Breast epithelium (tissue), 4 donors: ENCODE measurements at regions of chr1 and their contacts with region 1.

Region 1: GRCh38 chr1:150464422-150464826 is 22.8 kb upstream of the TARS2 start:
- DNase-seq: peak in 1 of 2 donors; percentile 31
- H3K4me3 ChIP-seq: no peak overlapping the region
- H3K27ac ChIP-seq: no peak overlapping the region
- H3K4me1 ChIP-seq: no peaks in the 10 kb centered on the region
- H3K27me3 ChIP-seq: no peaks in the 10 kb centered on the region
- CTCF ChIP-seq: peak; percentile 73 to 80 (median 76)
- POLR2A ChIP-seq: no peak

Region 2: GRCh38 chr1:150083907-150084306 is 380.5 kb before region 1 on chr1:
- intact Hi-C with region 1: no loop called
- DNase-seq: no peak
- H3K4me3 ChIP-seq: no peak overlapping the region
- H3K27ac ChIP-seq: no peak overlapping the region
- H3K4me1 ChIP-seq: no peaks in the 10 kb centered on the region
- H3K27me3 ChIP-seq: no peaks in the 10 kb centered on the region
- CTCF ChIP-seq: no peak
- POLR2A ChIP-seq: no peak

Region 3: DNA sequence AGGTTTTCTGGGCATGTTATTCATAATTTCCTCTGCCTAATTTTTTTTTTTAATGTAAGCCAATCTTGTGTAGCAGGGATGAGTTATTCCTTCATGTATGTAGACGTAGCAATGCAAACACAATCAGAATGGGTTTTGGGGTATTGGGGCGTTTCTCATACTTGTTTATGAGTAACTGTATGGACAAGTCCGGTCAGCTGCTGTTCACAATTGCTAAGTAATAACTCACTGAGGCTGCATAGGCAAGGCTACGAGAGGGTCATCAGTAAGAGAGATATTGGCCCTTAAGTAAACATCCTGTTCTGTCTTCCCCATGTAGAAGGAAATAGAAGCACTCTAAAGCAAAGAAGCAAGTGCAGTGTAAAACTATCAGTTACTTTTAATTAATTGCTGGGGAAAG is 13.3 kb after region 1 on chr1:
- intact Hi-C with region 1: no loop called
- DNase-seq: no peak
- H3K4me3 ChIP-seq: no peak overlapping the region
- H3K27ac ChIP-seq: no peak overlapping the region
- H3K4me1 ChIP-seq: no peaks in the 10 kb centered on the region
- H3K27me3 ChIP-seq: no peaks in the 10 kb centered on the region
- CTCF ChIP-seq: no peak
- POLR2A ChIP-seq: no peak

Region 4: GRCh38 chr1:150507905-150508854 is 43.8 kb after region 1 on chr1 and contains the start of gene ECM1:
- intact Hi-C with region 1: no loop called
- DNase-seq: no peak
- H3K4me3 ChIP-seq: peak within 1 kb of the TSS; percentile 2 to 55 (median 43)
- H3K27ac ChIP-seq: peak within 1 kb of the TSS; percentile 69 to 92
- H3K4me1 ChIP-seq: no peaks in the 10 kb centered on the region
- H3K27me3 ChIP-seq: no peaks in the 10 kb centered on the region
- CTCF ChIP-seq: no peak
- POLR2A ChIP-seq: no peak
- total RNA-seq, gene ECM1: 4.0 to 53.3 (median 10.2) TPM

Region 5: DNA sequence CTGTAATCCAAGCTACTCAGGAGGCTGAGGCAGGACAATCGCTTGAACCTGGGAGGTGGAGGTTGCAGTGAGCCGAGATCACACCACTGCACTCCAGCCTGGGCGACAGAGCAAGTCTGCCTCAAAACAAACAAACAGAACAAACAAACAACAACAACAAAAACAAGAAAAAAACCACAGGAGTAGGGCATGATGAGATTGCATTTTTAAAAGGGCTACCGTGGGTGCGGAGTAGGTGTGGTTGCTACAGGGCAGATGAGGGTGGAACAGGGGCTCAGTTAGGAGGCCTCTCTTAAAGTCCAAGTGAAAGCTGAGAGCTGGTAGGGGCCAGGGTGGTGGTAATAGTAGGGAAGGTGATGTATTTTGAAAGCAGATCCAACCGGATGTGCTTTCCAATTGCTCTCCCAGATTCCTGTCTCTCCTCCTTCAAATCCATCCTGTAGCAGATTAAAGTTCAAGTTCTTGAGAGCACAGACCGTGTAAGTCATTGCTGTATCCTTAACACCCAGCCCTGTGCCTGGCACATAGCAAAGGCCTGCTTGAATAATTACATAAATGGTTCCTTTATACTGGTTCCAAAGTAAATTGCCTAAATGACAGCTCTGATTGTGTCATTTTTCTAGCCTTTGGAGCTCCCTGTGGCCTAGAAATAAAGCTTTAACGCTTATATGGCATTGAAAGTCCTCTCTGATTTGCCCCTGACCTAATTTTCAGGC is 1345.0 kb after region 1 on chr1:
- intact Hi-C with region 1: loop called (anchors 5 kb)
- DNase-seq: no peak
- H3K4me3 ChIP-seq: no peak overlapping the region
- H3K27ac ChIP-seq: peak overlapping the region in 1 of 2 donors; percentile 40
- H3K4me1 ChIP-seq: no peaks in the 10 kb centered on the region
- H3K27me3 ChIP-seq: no peaks in the 10 kb centered on the region
- CTCF ChIP-seq: peak in 1 of 3 donors; percentile 4
- POLR2A ChIP-seq: no peak

Region 6: DNA sequence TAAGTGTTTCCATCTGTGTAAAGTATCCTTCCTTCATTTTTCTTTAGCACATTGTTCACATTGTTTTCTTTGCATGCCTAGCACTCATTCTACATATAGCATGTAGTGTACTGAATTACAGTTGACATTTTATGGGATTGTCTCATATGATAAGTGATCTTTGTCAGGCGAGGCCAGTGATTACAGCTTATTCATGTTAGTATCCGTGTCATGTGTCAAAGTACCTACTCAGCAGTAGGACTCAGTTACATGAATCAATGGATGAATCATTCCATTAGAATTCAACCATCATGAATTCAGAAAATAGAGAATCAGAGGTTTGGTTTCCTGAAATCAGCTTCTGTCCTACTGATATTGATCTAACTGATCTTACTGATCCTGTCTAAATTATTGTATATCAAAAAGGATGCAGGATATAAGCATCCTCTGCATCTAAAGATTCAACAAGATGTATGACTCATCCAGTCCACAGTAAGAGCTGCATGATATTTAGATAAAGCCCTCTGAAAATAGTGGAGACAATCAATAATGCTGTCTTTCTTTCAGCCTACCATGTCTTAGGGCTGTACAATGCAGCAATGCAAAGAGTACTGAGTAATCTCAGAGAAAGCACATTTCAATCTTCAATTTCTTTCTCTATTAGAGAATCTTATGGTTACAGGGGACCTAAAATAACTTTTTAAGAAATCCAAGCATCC is 1780.3 kb after region 1 on chr1:
- intact Hi-C with region 1: no loop called
- DNase-seq: no peak
- H3K4me3 ChIP-seq: no peak overlapping the region
- H3K27ac ChIP-seq: no peak overlapping the region
- H3K4me1 ChIP-seq: no peaks in the 10 kb centered on the region
- H3K27me3 ChIP-seq: no peaks in the 10 kb centered on the region
- CTCF ChIP-seq: no peak
- POLR2A ChIP-seq: no peak